OCI-LY7 (cell line): ENCODE measurements at regions of chr7 and their contacts with region 1.

Region 1: DNA sequence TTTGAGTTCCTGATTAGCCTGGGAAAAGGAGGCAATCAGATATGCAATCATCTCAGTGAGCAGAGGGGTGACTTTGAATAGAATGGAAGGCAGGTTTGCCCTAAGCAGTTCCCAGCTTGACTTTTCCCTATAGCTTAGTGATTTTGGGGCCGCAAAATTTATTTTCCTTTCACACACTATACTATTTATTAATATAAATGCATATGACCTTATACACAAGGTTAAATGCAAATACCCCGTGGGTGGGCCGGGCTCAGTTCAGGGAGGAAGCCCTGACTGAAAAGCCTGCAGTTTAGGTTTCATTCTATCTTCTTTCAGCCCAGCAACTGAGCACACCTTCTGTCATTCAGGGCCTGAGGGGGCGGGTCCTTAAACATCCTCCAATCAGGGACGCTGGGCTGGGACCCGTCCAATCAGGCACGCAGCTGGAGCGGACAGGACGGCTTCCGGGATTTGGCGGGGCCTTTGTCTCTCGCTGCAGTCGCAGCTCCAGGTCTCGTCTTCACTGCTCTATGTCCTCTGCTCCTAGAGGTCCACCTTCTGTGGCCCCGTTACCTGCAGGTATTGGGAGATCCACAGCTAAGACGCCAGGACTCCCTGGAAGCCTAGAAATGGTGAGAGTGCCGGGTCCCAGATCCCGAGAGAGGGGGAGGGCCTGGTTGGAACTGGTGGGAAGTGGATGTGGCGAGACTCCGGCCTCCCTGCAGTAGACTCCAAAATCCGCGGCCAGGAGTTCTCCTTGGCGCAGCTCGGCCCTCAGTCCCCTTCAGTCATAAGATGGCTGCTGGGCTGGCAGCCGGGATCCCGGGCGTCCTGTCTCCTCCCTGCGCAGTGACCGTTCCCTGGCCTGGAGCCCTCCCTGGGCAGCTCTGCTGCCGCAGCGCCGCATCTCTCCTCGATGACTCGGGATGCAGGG is at the start of gene ZNF273:
- DNase-seq: peak; percentile 96
- H3K4me3 ChIP-seq: peak within 1 kb of the TSS; percentile 86
- H3K27ac ChIP-seq: peak within 1 kb of the TSS; percentile 54
- H3K4me1 ChIP-seq: peaks cover 49% of the 10 kb centered on the region
- CTCF ChIP-seq: no peak
- total RNA-seq, gene ZNF273: 19.0 and 22.8 TPM in 2 replicates

Region 2: GRCh38 chr7:64192148-64192704 is 710.8 kb before region 1 on chr7:
- CTCF ChIA-PET with region 1: no interaction called
- POLR2A ChIA-PET with region 1: no interaction called
- intact Hi-C with region 1: no loop called
- DNase-seq: no peak
- H3K4me3 ChIP-seq: no peak overlapping the region
- H3K27ac ChIP-seq: no peak overlapping the region
- H3K4me1 ChIP-seq: no peaks in the 10 kb centered on the region
- CTCF ChIP-seq: no peak

Region 3: DNA sequence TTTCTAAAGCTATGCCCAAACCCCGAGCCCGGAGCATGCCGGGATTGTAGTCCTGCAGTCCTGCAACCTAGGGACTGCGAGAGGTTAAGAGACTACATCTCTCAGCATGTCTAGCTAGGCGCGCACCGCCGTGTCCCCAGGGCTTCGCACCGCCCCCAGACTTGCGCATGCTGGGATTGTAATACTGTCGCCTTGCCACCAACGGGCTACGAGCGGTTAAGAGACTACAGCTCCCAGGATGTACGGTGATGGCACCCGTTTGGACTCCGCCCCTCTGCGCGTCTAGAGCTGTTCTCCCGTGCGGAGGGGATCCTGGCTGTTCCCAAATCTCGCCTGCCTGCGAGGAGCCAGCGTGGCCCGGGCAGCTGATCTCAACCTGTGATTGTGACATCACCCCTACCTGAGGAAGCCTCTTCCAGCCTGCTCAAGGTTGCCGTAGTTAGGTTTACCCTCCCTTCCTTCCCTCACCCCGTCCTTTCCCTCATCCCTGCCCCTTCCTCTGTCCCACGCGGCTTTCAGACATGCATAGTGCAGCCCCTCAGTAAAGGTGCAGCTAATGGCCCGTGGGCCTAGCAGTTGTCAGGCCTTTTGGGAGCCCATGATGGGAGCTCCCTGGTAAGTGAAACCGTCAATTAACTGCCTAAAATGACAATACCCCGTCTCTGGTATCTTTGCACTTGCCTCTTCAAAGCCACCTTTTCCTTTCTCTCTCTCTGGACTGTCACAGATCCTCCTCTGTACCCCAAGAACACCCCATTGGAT is 595.6 kb before region 1 on chr7:
- CTCF ChIA-PET with region 1: no interaction called
- POLR2A ChIA-PET with region 1: no interaction called
- intact Hi-C with region 1: loop called (anchors 2 kb)
- DNase-seq: peak; percentile 98
- H3K4me3 ChIP-seq: peak overlapping the region; percentile 91
- H3K27ac ChIP-seq: peak overlapping the region; percentile 91
- H3K4me1 ChIP-seq: peaks cover 38% of the 10 kb centered on the region
- CTCF ChIP-seq: no peak

Region 4: DNA sequence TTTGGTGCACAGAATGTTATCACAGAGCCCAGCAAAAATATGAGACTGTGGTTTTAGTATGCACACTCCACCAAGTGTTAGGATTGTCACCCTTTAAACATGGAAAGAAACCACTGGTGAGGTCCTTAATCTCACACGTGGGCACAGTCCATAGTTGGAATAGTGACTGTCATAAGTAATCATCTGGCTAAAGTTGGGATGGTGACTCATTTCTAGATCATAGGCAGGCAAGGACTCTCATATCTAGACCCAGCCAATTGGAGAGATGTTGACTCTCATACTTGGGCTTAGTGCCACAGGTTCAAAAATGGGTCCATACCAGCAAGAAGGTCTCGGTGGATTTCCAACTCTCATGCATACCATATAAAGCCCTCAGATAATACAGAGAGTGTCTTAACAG is 300.5 kb before region 1 on chr7:
- CTCF ChIA-PET with region 1: no interaction called
- POLR2A ChIA-PET with region 1: no interaction called
- intact Hi-C with region 1: no loop called
- DNase-seq: no peak
- H3K4me3 ChIP-seq: no peak overlapping the region
- H3K27ac ChIP-seq: no peak overlapping the region
- H3K4me1 ChIP-seq: no peaks in the 10 kb centered on the region
- CTCF ChIP-seq: no peak

Region 5: DNA sequence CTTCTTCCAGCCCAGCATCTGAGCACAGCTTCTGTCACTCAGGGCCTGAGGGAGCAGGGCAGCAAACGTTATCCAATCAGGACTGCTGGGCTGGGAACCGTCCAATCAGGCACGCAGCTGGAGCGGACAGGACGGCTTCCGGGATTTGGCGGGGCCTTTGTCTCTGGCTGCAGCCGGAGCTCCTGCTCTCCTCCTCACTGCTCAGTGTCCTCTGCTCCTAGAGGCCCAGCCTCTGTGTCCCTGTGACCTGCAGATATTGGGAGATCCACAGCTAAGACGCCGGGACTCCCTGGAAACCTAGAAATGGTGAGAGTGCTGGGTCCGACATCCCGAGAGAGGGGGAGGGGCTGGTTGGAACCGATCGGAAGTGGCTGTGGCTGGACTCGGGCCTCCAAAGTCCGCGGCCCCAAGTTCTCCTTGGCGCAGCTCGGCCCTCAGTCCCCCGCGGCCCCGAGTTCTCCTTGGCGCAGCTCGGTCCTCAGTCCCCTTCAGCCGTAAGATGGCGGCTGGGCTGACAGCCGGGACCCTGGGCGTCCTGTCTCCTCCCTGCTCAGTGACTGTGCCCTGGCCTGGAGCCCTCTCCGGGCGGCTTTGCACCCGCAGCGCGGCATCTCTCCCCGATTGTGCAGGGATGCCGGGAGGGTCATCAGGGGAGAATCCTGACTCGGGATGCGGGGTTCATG is 236.9 kb before region 1 on chr7 and contains the start of gene ZNF107:
- CTCF ChIA-PET with region 1: no interaction called
- POLR2A ChIA-PET with region 1: interaction called, 4 read pairs
- intact Hi-C with region 1: loop called (anchors 2 kb)
- DNase-seq: peak; percentile 95
- H3K4me3 ChIP-seq: peak within 1 kb of the TSS; percentile 93
- H3K27ac ChIP-seq: peak within 1 kb of the TSS; percentile 89
- H3K4me1 ChIP-seq: peaks cover 30% of the 10 kb centered on the region
- CTCF ChIP-seq: no peak
- total RNA-seq, gene ZNF107: 63.3 and 68.9 TPM in 2 replicates

Region 6: GRCh38 chr7:64794171-64794844 is 108.8 kb before region 1 on chr7 and contains the start of gene ZNF138:
- CTCF ChIA-PET with region 1: no interaction called
- POLR2A ChIA-PET with region 1: interaction called, 5 read pairs
- intact Hi-C with region 1: loop called (anchors 5 kb)
- DNase-seq: peak; percentile 98
- H3K4me3 ChIP-seq: peak within 1 kb of the TSS; percentile 99
- H3K27ac ChIP-seq: peak within 1 kb of the TSS; percentile 85
- H3K4me1 ChIP-seq: peaks cover 29% of the 10 kb centered on the region
- CTCF ChIP-seq: no peak
- total RNA-seq, gene ZNF138: 24.4 and 25.6 TPM in 2 replicates

Region 7: GRCh38 chr7:65475734-65476319 is 572.8 kb after region 1 on chr7:
- CTCF ChIA-PET with region 1: no interaction called
- POLR2A ChIA-PET with region 1: no interaction called
- intact Hi-C with region 1: loop called (anchors 10 kb)
- DNase-seq: peak; percentile 99
- H3K4me3 ChIP-seq: peak overlapping the region; percentile 60
- H3K27ac ChIP-seq: peak overlapping the region; percentile 98
- H3K4me1 ChIP-seq: peaks cover 65% of the 10 kb centered on the region
- CTCF ChIP-seq: no peak